Activated CD4-positive, alpha-beta memory T cell treated with anti-CD3 and anti-CD28 coated beads, Interleukin-2, amount 10 ng/mL, durations not matched to agents 7 days and 5 days (primary cell): ENCODE measurements at regions of chr12 and their contacts with region 1.

Region 1: DNA sequence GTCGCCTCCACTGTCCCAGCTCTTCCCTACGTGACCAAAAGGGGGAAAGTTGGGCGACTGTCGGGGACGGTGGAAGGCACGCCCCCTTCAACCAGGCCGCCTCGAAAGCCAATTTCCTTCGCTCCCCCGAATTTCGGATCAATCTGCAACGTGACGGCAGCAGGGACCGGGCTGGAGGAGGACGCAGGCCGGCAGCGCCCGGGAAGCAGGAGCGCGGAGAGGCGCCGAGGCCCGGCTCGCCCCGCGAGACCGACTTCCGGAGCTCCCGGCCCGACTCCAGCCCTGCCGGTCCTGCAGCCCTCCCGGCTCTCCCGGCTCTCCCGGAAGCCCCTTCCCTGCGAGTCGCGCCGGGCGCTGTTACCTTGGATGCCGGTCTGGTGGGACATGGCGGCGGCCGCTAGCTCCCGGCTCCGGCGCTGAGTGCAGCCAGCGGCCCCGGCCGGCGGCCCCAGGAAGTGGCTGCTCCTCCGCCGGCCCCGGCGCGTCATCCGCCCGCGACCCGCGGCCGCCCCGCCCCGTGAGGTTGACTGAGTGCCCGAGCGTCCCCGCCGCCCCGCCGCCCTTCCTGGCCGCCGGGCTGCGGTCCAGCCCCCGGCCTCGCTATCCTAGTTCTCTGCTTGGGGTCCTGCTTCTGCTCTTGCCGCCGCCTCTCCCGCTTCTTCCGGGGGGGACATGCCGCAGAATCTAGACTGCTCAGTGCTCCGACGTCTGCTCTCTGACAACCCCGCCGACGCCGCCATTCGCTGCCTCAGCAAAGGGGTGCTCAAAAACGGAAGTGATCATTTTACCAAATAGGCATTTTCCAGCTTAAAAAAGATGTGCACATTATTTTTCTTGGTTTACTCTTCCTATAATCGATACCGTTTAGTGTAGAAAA is at the start of gene TWF1:
- DNase-seq: peak; percentile 90
- H3K4me3 Mint-ChIP-seq: peak within 1 kb of the TSS; percentile 96
- H3K27ac Mint-ChIP-seq: peak within 1 kb of the TSS; percentile 100
- H3K4me1 Mint-ChIP-seq: peaks cover 34% of the 10 kb centered on the region
- H3K27me3 Mint-ChIP-seq: no peaks in the 10 kb centered on the region
- total RNA-seq, gene TWF1: 29.1 to 33.6 TPM

Region 2: GRCh38 chr12:43758728-43759563 is 47.2 kb before region 1 on chr12 and contains the starts of genes IRAK4 and PUS7L:
- CTCF ChIA-PET with region 1: interaction called, 7 read pairs
- POLR2A ChIA-PET with region 1: interaction called, 88 read pairs
- DNase-seq: peak; percentile 96
- H3K4me3 Mint-ChIP-seq: peak within 1 kb of the TSS; percentile 97
- H3K27ac Mint-ChIP-seq: peak within 1 kb of the TSS; percentile 99
- H3K4me1 Mint-ChIP-seq: peaks cover 64% of the 10 kb centered on the region
- H3K27me3 Mint-ChIP-seq: no peaks in the 10 kb centered on the region
- total RNA-seq, gene IRAK4: 44.3 to 46.0 TPM
- total RNA-seq, gene PUS7L: 17.1 to 18.8 TPM

Region 3: GRCh38 chr12:43795716-43796288 is 10.3 kb before region 1 on chr12:
- CTCF ChIA-PET with region 1: interaction called, 4 read pairs
- POLR2A ChIA-PET with region 1: interaction called, 23 read pairs
- DNase-seq: no peak
- H3K4me3 Mint-ChIP-seq: no peak overlapping the region
- H3K27ac Mint-ChIP-seq: no peak overlapping the region
- H3K4me1 Mint-ChIP-seq: peaks cover 2% of the 10 kb centered on the region
- H3K27me3 Mint-ChIP-seq: no peaks in the 10 kb centered on the region

Region 4: DNA sequence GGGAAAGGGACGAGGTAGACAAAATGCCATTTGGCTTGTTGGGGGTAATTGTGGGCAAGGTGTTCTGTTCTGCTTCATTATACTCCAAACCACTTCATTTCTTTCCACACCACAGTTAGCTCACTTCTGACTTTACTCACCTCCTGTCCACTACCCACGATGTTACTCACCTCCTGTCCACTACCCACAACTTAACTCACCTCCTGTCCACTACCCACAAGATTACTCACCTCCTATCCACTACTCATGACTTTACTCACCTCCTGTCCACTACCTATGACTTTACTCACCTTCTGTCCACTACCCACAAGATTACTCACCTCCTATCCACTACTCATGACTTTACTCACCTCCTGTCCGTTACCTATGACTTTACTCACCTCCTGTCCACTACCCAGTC is 10.1 kb after region 1 on chr12:
- CTCF ChIA-PET with region 1: interaction called, 5 read pairs
- POLR2A ChIA-PET with region 1: interaction called, 41 read pairs
- DNase-seq: no peak
- H3K4me3 Mint-ChIP-seq: no peak overlapping the region
- H3K27ac Mint-ChIP-seq: no peak overlapping the region
- H3K4me1 Mint-ChIP-seq: peaks cover 6% of the 10 kb centered on the region
- H3K27me3 Mint-ChIP-seq: peaks cover 4% of the 10 kb centered on the region

Region 5: GRCh38 chr12:43835656-43836474 is 29.8 kb after region 1 on chr12 and contains the start of gene TMEM117:
- CTCF ChIA-PET with region 1: interaction called, 11 read pairs
- POLR2A ChIA-PET with region 1: interaction called, 56 read pairs
- DNase-seq: peak; percentile 61
- H3K4me3 Mint-ChIP-seq: peak within 1 kb of the TSS; percentile 84
- H3K27ac Mint-ChIP-seq: peak within 1 kb of the TSS; percentile 57
- H3K4me1 Mint-ChIP-seq: peaks cover 22% of the 10 kb centered on the region
- H3K27me3 Mint-ChIP-seq: peaks cover 6% of the 10 kb centered on the region
- total RNA-seq, gene TMEM117: 1.6 to 1.7 TPM